ENCODE measurements at regions of chr4 and their contacts with region 1.

Region 1: GRCh38 chr4:55866973-55867574 is 13.6 kb downstream of the EXOC1 start:
- DNase-seq: peak; percentile 16
- H3K4me3 ChIP-seq: no peak overlapping the region
- CTCF ChIP-seq: peak; percentile 68

Region 2: GRCh38 chr4:55853484-55854046 is 13.5 kb before region 1 on chr4 and contains the start of gene EXOC1:
- CTCF ChIA-PET with region 1: interaction called, 16 read pairs
- POLR2A ChIA-PET with region 1: no interaction called
- DNase-seq: peak; percentile 69
- H3K4me3 ChIP-seq: peak within 1 kb of the TSS; percentile 90
- CTCF ChIP-seq: no peak

Region 3: DNA sequence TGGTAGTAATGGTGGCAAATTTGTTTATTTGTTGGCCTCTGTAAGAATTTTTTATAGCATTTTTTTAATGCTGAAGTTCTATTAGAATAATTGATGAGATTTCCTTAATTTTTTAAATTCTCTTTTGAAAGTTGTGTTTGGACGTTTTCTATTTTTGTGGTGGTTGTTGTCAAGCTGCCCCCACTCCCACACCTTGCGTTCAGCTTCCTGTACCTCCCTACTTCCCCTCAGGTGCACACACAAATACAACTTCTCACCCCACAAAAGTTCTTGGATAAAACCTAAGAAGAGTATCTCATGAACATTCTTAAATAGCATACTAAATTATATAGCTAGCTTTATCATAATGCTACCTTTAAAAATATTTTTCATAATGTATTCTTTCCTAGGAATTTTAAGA is 25.1 kb after region 1 on chr4:
- CTCF ChIA-PET with region 1: interaction called, 12 read pairs
- POLR2A ChIA-PET with region 1: no interaction called
- DNase-seq: no peak
- H3K4me3 ChIP-seq: no peak overlapping the region
- CTCF ChIP-seq: no peak